ENCODE measurements at regions of chr19 and their contacts with region 1.

Region 1: GRCh38 chr19:45902651-45903625 is 525 bp upstream of the MYPOP start:
- DNase-seq: peak; percentile 91 to 99 (median 95)
- H3K4me3 ChIP-seq: peak overlapping the region; percentile 57 to 99 (median 85)
- H3K27ac ChIP-seq: peak overlapping the region; percentile 71 to 99 (median 94)
- H3K27me3 ChIP-seq: no peaks in the 10 kb centered on the region
- CTCF ChIP-seq: peak in 29 of 56 donors; percentile 5 to 55 (median 23)

Region 2: DNA sequence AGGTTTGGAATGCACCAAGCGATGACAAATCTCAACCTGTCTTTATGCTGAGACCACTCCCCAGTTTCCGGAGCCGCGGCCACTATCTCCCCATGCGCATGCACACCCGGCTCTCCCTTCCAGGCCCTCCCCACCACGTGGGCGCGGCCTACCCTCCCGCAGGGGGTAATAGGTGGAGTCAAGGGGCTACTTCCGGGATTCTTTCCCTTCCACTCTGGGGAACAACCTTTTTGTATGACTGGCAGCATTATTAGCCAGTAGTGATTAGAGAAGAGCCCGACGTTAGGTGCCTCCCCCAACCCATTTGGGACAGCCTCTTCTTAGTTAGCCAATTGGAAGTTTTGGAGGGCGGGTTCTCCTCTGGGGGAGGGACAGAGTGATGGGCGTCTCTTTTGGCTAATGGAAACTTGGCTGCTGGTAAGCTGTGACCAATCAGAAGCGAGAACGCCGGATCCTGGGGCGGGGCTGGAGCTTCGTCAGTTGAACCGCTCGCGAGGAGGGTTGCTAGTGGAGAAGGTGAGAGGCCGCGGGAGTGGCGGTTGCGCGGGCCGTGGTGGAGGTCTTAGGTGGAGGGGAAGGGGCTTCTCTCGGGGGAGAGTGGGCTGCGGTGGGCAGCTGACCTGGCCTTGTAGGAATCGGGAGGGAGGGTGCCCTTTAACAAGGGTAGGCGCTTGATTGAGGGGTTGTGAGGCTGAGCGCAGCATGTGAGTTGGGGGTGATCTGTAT is 92.2 kb after region 1 on chr19 and contains the start of gene CCDC61:
- intact Hi-C with region 1: loop called in 1 of 2 experiments (anchors 5 kb)
- DNase-seq: peak; percentile 91 to 98 (median 97)
- H3K4me3 ChIP-seq: peak within 1 kb of the TSS; percentile 47 to 99 (median 88)
- H3K27ac ChIP-seq: peak within 1 kb of the TSS in 41 of 59 donors; percentile 13 to 87 (median 67)
- H3K27me3 ChIP-seq: no peaks in the 10 kb centered on the region
- CTCF ChIP-seq: peak in 18 of 56 donors; percentile 5 to 45 (median 23)
- total RNA-seq, gene CCDC61: 19.7 to 65.4 (median 34.3) TPM